ENCODE measurements at regions of chr2 and their contacts with region 1.

Region 1: DNA sequence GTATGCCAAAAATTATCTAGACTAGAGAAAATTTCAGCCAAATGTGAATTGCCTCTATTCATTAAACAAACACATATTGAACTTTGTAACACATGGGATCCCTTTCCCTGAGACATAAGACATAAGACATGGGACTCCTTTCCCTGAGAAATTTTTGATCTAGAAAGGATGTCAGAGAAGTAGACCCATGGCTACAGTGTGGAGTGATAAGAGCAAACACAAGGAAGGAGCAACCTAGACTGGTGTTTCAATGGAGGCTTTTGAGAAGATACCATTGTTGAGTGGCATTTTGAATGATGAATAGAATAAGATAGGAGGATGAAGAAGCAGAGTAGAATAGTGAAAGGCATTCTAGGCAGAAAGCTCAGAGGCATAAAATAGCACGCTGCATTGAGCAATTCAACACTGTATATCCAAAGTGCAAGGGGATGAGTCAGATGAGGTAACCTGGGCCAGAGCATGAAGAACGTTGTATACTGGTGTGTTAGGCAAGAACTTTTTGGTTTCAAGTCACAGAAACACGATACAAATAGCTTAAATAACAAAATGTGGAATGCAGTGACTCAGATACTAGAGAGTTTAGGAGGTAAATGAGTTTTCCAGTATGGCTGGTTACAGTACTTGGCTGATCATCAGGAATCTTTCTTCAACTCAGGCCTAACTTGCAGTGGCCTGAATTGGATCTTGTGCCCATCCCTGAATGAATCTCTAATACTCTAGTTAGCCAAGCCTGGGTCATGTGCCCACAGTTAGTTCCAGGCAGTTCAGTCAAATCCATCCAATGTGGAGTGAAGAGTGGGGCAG is 129.8 kb upstream of the TANK start:
- DNase-seq: no peak
- ATAC-seq: no peak
- H3K4me3 ChIP-seq: no peak overlapping the region
- H3K27ac ChIP-seq: no peak overlapping the region
- H3K4me1 ChIP-seq: no peaks in the 10 kb centered on the region
- H3K27me3 ChIP-seq: no peaks in the 10 kb centered on the region
- CTCF ChIP-seq: no peak
- POLR2A ChIP-seq: no peak
- RAD21 ChIP-seq: no peak

Region 2: DNA sequence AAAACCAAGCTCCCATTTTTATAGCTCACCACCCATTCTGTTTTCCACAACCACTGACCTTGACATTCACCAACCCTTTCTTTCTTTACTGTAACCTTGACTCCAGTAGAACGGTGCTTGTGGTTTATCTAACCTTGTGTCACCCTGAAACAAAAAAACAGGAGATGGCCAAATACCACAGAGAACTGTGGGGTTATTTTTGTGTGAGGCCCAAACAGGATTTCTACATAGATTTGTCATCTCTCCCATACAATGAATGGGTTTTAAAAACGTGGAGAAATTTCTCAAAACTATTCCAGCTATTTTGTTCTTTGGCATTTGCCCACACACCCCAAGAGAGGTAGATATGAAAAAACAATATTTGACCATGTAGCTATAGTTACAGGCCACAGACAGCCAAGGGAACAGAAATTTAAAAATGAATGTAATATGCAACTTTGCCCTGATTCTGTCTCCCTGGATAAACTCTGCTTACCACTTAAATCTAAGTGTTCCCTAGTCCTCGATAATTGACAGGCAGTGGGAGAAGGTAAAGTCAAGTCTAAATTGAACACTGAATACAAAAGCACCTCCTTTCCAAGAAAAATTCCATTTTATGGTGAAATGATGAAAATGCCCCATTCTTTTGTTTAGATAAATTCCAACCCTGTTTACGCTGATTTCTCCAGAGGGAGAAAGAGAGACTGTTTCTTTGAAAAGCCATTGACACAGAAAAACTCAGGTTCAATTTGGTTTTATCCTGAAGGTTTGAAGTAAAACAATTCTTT is 101.4 kb before region 1 on chr2:
- CTCF ChIA-PET with region 1: no interaction called
- POLR2A ChIA-PET with region 1: no interaction called
- RAD21 ChIA-PET with region 1: no interaction called
- intact Hi-C with region 1: no loop called
- DNase-seq: no peak
- ATAC-seq: no peak
- H3K4me3 ChIP-seq: no peak overlapping the region
- H3K27ac ChIP-seq: no peak overlapping the region
- H3K4me1 ChIP-seq: no peaks in the 10 kb centered on the region
- H3K27me3 ChIP-seq: no peaks in the 10 kb centered on the region
- CTCF ChIP-seq: no peak
- POLR2A ChIP-seq: no peak
- RAD21 ChIP-seq: no peak

Region 3: DNA sequence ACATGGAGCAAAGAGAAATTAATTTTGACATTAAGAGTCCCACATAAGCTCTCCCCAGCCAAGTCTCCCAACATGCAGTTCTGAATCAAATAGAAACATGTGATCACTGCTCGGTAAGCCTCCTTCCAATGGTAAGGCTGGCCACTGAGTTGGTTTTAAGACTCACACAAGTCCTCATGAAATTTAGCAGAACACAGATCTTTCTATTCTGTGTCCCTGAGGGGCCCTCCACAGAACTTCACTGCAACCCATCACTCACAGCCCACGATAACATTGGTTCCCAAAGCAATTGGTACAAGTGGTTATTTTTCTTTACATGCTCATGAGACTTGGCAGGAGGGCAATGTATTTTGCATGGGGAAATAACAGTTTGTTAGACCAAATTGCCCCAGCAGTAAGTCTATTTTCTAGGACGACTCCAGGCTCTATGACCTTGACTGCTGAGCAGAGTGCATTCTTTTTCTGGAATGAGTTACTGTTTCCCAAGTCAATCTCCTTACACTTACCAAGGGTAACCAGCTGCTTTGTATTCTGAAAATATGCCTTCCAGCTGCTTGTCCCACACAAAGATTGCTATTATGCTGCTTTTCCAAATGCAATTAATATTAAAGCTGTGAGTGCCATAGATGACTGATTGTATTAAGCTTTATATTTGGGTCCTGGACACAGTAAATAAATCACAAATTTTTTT is 12.5 kb before region 1 on chr2:
- CTCF ChIA-PET with region 1: no interaction called
- POLR2A ChIA-PET with region 1: no interaction called
- RAD21 ChIA-PET with region 1: no interaction called
- intact Hi-C with region 1: loop called (anchors 1 kb)
- DNase-seq: no peak
- ATAC-seq: no peak
- H3K4me3 ChIP-seq: no peak overlapping the region
- H3K27ac ChIP-seq: no peak overlapping the region
- H3K4me1 ChIP-seq: no peaks in the 10 kb centered on the region
- H3K27me3 ChIP-seq: no peaks in the 10 kb centered on the region
- CTCF ChIP-seq: no peak
- POLR2A ChIP-seq: no peak
- RAD21 ChIP-seq: no peak

Measured in HCT116 (cell line).